Psoas muscle (tissue), 8 donors: ENCODE measurements at regions of chr1 and their contacts with region 1.

Region 1: GRCh38 chr1:235075188-235075926 is 53.3 kb downstream of the TOMM20 start:
- DNase-seq: peak; percentile 83 to 88
- ATAC-seq: peak; percentile 28 to 62 (median 52)
- H3K4me3 ChIP-seq: peak overlapping the region; percentile 4
- H3K27ac ChIP-seq: peak overlapping the region; percentile 96
- H3K4me1 ChIP-seq: peaks cover 72% of the 10 kb centered on the region
- H3K27me3 ChIP-seq: no peaks in the 10 kb centered on the region
- CTCF ChIP-seq: no peak

Region 2: GRCh38 chr1:234533975-234534876 is 541.1 kb before region 1 on chr1:
- intact Hi-C with region 1: loop called in 1 of 2 experiments (anchors 5 kb)
- DNase-seq: peak; percentile 92 to 94
- ATAC-seq: no peak
- H3K4me3 ChIP-seq: no peak overlapping the region
- H3K27ac ChIP-seq: peak overlapping the region; percentile 98
- H3K4me1 ChIP-seq: peaks cover 84% of the 10 kb centered on the region
- H3K27me3 ChIP-seq: no peaks in the 10 kb centered on the region
- CTCF ChIP-seq: no peak

Region 3: DNA sequence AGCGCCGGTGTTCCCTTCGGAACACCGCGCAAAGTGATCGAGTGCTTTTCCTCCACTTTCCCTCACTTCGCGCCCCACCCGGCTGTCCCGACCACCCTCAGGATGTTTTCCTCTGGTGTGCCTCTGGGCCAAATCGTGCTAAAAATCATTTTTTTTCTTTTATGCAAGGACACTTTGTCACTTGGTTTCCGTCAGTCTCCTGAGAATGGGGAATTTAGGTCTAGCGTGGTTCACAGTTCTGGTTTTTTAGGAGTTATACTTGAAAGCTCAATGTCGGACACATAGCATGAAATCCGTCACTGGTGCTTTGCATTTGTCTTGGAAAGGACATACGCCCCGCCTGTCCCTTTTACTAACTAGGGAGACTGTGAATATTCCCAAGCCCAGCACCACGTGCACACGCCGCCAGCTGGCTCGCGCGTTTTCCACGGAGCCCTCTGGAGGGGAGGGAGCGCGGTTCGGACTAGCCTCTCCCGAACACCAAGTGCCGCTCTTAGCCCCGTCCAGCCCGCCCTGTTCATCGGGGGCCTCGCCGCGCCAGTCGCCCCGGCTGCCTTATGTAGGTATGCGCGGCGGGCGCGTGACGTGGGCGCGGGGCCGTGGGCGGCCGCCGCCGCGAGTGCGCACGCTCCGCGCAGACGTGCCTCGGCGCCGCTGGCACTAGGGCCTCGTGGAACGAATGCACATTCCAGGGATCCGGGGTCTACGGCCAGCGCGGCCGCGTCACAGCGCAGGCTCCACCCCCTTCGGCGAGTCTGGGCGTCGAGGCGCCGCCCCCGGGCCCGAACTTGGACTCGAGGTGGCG is 464.8 kb before region 1 on chr1:
- intact Hi-C with region 1: loop called (anchors 2 to 5 kb)
- DNase-seq: peak; percentile 96 to 98
- ATAC-seq: peak; percentile 63 to 78 (median 72)
- H3K4me3 ChIP-seq: peak overlapping the region; percentile 72
- H3K27ac ChIP-seq: peak overlapping the region; percentile 99
- H3K4me1 ChIP-seq: peaks cover 36% of the 10 kb centered on the region
- H3K27me3 ChIP-seq: no peaks in the 10 kb centered on the region
- CTCF ChIP-seq: peak; percentile 6

Region 4: GRCh38 chr1:234772345-234773147 is 302.8 kb before region 1 on chr1:
- intact Hi-C with region 1: loop called in 1 of 2 experiments (anchors 5 kb)
- DNase-seq: peak; percentile 75 to 87
- ATAC-seq: peak; percentile 98 to 99 (median 98)
- H3K4me3 ChIP-seq: peak overlapping the region; percentile 16
- H3K27ac ChIP-seq: peak overlapping the region; percentile 82
- H3K4me1 ChIP-seq: peaks cover 18% of the 10 kb centered on the region
- H3K27me3 ChIP-seq: peaks cover 0 to 13% (median 3%) of the 10 kb centered on the region in 3 donors
- CTCF ChIP-seq: no peak

Region 5: GRCh38 chr1:234899041-234899729 is 176.2 kb before region 1 on chr1:
- intact Hi-C with region 1: loop called in 1 of 2 experiments (anchors 5 kb)
- DNase-seq: no peak
- ATAC-seq: peak; percentile 40 to 71 (median 54)
- H3K4me3 ChIP-seq: no peak overlapping the region
- H3K27ac ChIP-seq: peak overlapping the region; percentile 90
- H3K4me1 ChIP-seq: peaks cover 27% of the 10 kb centered on the region
- H3K27me3 ChIP-seq: no peaks in the 10 kb centered on the region
- CTCF ChIP-seq: no peak

Region 6: DNA sequence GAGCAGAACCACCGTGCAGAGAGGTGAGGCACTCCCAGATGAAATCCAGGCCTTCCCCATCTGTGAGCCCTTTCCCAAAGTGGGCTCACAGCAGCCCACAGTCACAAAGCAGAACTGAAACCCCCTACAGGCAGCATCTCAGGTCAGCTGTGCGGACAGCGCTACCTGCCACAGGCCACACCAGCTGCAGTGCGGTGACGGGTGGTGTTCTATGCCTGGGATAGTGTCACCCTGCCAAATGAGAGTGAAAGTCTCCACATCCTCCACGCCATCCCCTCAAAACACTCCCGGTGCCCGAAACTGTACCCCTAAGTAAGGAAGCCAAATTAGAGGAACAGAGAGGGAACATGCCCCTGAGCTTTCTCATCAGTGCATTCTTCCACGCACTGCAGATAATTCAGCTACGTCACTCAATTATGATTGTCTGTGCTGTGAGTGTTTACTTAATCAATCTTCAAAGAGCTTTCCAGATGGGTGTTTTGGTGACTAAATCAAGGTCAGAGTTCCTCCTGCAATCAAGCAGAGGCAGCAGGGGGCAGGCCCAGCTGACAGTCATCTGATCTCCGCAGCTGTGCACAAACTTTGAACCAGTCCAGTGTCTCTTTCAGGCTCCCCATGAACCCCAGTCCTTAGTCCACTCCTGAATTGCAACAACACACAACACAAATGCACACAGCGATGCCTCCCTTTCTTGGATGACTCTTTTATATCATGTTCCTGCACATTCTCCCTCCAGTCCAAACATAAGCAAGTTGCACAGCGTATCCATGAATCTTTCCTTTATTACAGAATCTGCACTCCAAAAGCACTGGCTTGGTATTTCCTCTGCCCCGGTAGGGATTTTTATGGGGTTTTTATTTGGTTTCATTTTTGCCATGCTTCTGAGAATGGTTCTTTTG is 96.7 kb before region 1 on chr1:
- intact Hi-C with region 1: loop called (anchors 5 kb)
- DNase-seq: peak; percentile 54 to 77
- ATAC-seq: peak in 2 of 4 donors; percentile 15 to 39
- H3K4me3 ChIP-seq: no peak overlapping the region
- H3K27ac ChIP-seq: peak overlapping the region; percentile 86
- H3K4me1 ChIP-seq: peaks cover 63% of the 10 kb centered on the region
- H3K27me3 ChIP-seq: no peaks in the 10 kb centered on the region
- CTCF ChIP-seq: no peak

Region 7: GRCh38 chr1:235225299-235225698 is 149.9 kb after region 1 on chr1:
- intact Hi-C with region 1: no loop called
- DNase-seq: no peak
- ATAC-seq: no peak
- H3K4me3 ChIP-seq: no peak overlapping the region
- H3K27ac ChIP-seq: no peak overlapping the region
- H3K4me1 ChIP-seq: peaks cover 3% of the 10 kb centered on the region
- H3K27me3 ChIP-seq: no peaks in the 10 kb centered on the region
- CTCF ChIP-seq: no peak